ENCODE measurements at regions of chr11 and their contacts with region 1.

Region 1: GRCh38 chr11:46389450-46390253 is 1.9 kb downstream of the CHRM4 start:
- DNase-seq: peak; percentile 82 to 88 (median 86)
- H3K4me3 ChIP-seq: peak overlapping the region in 2 of 3 donors; percentile 38 to 51
- H3K27ac ChIP-seq: no peak overlapping the region
- H3K4me1 ChIP-seq: peaks cover 0 to 18% (median 4%) of the 10 kb centered on the region in 3 donors
- H3K27me3 ChIP-seq: peaks cover 13% of the 10 kb centered on the region
- CTCF ChIP-seq: peak; percentile 69

Region 2: DNA sequence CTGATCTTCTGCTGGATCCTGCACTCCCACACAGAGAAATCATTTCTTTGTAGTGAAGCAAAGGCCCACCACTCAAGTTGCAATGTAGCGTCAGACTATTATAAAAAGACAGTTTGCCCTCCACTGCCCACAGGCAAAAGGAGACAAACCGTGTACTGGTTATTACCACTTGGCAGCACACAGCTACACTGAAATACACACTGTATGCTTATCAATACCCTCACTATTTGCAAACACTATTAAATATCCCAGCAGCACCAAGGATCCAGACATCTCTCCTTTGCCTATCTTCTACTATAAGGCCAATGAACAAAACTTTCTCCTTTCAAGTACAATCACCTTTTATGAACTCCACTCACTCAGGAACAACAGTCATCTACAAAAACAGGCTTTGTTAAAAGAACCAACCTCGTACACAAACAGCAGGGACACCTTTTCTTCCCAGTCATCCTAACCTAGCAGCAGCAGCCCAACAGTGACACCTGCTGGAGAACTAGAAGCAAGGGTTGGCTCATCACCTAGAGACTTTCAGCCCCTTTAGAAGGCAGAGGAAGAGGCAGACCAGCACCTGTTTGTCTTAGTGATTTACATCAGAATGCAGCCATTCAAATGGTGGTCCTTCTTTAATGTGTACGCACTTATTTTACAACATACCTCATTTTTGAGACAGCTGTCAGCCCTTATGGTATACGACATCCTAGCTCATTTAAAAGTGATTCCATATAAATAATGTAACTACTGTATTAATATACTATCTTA is 148.1 kb after region 1 on chr11:
- intact Hi-C with region 1: loop called (anchors 10 kb)
- DNase-seq: peak in 4 of 5 donors; percentile 76 to 96 (median 84)
- H3K4me3 ChIP-seq: no peak overlapping the region
- H3K27ac ChIP-seq: no peak overlapping the region
- H3K4me1 ChIP-seq: peaks cover 0 to 7% (median 0%) of the 10 kb centered on the region in 3 donors
- H3K27me3 ChIP-seq: no peaks in the 10 kb centered on the region
- CTCF ChIP-seq: peak; percentile 88

Measured in kidney (tissue), 22 donors.